Activated CD8-positive, alpha-beta memory T cell treated with anti-CD3 and anti-CD28 coated beads, Interleukin-2, amount 10 ng/mL, durations not matched to agents 7 days and 5 days (primary cell): ENCODE measurements at regions of chr10 and their contacts with region 1.

Region 1: GRCh38 chr10:101141616-101142532 is 10.8 kb downstream of the TLX1 start:
- DNase-seq: peak; percentile 84
- ATAC-seq: peak; percentile 93
- H3K4me3 Mint-ChIP-seq: no peak overlapping the region
- H3K27ac Mint-ChIP-seq: no peak overlapping the region
- H3K4me1 Mint-ChIP-seq: peaks cover 10% of the 10 kb centered on the region
- H3K27me3 Mint-ChIP-seq: peaks cover 96% of the 10 kb centered on the region

Region 2: GRCh38 chr10:101042667-101043355 is 99.1 kb before region 1 on chr10:
- CTCF ChIA-PET with region 1: interaction called, 29 read pairs
- DNase-seq: peak; percentile 96
- ATAC-seq: peak; percentile 95
- H3K4me3 Mint-ChIP-seq: peak overlapping the region; percentile 95
- H3K27ac Mint-ChIP-seq: peak overlapping the region; percentile 91
- H3K4me1 Mint-ChIP-seq: peaks cover 23% of the 10 kb centered on the region
- H3K27me3 Mint-ChIP-seq: peaks cover 31% of the 10 kb centered on the region

Region 3: GRCh38 chr10:101067356-101068083 is 74.4 kb before region 1 on chr10:
- CTCF ChIA-PET with region 1: interaction called, 26 read pairs
- DNase-seq: peak; percentile 85
- ATAC-seq: peak; percentile 64
- H3K4me3 Mint-ChIP-seq: peak overlapping the region; percentile 74
- H3K27ac Mint-ChIP-seq: no peak overlapping the region
- H3K4me1 Mint-ChIP-seq: peaks cover 22% of the 10 kb centered on the region
- H3K27me3 Mint-ChIP-seq: peaks cover 59% of the 10 kb centered on the region

Region 4: DNA sequence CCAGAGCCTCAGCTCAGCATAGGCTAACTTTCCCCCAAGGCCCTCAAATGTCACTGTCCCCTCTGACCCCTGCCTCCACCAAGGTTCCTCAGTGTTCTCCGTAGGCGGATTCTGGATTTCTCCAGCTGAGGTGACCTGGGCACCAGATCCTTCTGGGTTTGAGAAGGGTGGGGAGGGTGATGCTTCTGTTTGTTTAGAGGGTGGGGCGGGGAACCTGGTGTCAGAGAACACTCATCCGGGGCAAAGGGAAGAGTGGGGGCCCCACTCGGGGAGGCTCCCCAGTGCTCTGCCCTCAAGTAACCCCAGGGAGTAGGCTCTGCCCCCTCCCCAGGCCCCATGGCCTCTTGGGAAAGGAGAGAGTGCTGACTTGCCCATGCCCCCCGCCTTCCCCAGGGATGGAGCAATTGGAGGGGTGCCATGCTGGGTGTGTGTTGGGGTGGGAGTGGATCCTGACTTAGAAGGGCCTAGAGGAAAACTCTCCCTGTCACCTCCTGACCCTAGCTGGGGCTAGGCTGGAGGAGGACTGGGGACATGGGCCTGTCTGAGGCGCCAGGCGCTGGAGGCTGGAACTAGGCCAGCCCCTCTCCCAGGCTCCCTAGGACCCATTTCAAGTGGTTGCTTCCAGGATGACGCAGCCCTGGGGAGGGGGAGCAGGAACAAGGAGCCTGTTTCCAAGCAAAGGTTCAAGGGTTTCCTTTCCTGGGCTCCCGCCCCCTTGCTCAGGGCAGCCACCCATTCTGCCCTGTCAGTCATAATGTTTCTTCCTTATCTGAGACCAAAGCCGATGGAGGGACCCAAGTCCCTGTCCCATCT is 52.2 kb before region 1 on chr10:
- CTCF ChIA-PET with region 1: interaction called, 358 read pairs
- DNase-seq: no peak
- ATAC-seq: no peak
- H3K4me3 Mint-ChIP-seq: no peak overlapping the region
- H3K27ac Mint-ChIP-seq: no peak overlapping the region
- H3K4me1 Mint-ChIP-seq: no peaks in the 10 kb centered on the region
- H3K27me3 Mint-ChIP-seq: peaks cover 72% of the 10 kb centered on the region

Region 5: DNA sequence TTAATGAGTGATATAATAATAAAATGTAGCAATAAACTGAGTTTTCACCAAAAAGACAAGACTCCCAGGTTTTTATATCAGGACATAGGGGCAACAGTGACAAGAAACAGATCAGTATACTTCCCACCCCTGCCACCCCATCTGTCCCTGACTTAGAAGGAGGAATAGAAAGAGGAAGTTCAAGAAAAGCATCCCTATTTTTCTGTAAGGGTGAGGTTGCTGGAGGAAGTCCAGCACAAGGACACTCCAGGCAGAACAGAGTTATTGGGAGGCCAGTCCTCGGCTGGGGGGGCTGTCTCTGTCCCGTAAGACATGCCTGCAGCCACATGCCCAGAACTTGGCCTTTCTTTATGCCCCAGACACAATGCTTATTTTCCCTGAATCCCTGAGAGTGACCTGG is 27.2 kb before region 1 on chr10:
- CTCF ChIA-PET with region 1: interaction called, 10 read pairs
- DNase-seq: no peak
- ATAC-seq: no peak
- H3K4me3 Mint-ChIP-seq: no peak overlapping the region
- H3K27ac Mint-ChIP-seq: no peak overlapping the region
- H3K4me1 Mint-ChIP-seq: no peaks in the 10 kb centered on the region
- H3K27me3 Mint-ChIP-seq: peaks cover 56% of the 10 kb centered on the region

Region 6: DNA sequence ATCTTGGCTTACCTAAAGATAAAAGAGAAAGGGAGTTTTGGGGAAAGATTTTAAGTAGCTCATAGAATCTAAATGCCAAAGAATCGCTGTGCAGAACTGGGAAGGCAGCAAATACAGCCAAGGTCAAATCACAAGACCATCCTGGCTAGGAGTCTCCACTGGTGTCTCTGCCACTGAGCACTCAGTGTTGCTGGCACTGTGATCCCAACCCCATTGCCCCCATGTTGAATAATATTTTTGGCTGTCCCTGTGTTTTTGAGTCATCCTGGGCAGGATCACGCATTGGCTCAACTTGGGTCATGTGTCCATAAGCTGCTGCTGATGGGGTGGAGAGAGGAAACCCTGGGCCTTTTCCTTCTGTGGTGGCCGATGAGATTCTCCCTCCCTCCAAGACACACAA is 10.4 kb after region 1 on chr10:
- CTCF ChIA-PET with region 1: interaction called, 33 read pairs
- DNase-seq: no peak
- ATAC-seq: no peak
- H3K4me3 Mint-ChIP-seq: no peak overlapping the region
- H3K27ac Mint-ChIP-seq: no peak overlapping the region
- H3K4me1 Mint-ChIP-seq: no peaks in the 10 kb centered on the region
- H3K27me3 Mint-ChIP-seq: peaks cover 74% of the 10 kb centered on the region

Region 7: GRCh38 chr10:101222683-101223273 is 80.9 kb after region 1 on chr10:
- CTCF ChIA-PET with region 1: interaction called, 10 read pairs
- DNase-seq: no peak
- ATAC-seq: no peak
- H3K4me3 Mint-ChIP-seq: peak overlapping the region; percentile 22
- H3K27ac Mint-ChIP-seq: no peak overlapping the region
- H3K4me1 Mint-ChIP-seq: peaks cover 28% of the 10 kb centered on the region
- H3K27me3 Mint-ChIP-seq: peaks cover 88% of the 10 kb centered on the region

Region 8: GRCh38 chr10:101425535-101425934 is 283.7 kb after region 1 on chr10:
- CTCF ChIA-PET with region 1: no interaction called
- DNase-seq: no peak
- ATAC-seq: no peak
- H3K4me3 Mint-ChIP-seq: no peak overlapping the region
- H3K27ac Mint-ChIP-seq: no peak overlapping the region
- H3K4me1 Mint-ChIP-seq: no peaks in the 10 kb centered on the region
- H3K27me3 Mint-ChIP-seq: no peaks in the 10 kb centered on the region